ENCODE measurements at regions of chr10 and their contacts with region 1.

Region 1: GRCh38 chr10:119596537-119597404 is at the start of gene TIAL1:
- DNase-seq: peak; percentile 100
- H3K4me3 ChIP-seq: peak within 1 kb of the TSS; percentile 85 to 97 (median 97)
- H3K27ac ChIP-seq: peak within 1 kb of the TSS; percentile 95
- H3K4me1 ChIP-seq: peaks cover 41% of the 10 kb centered on the region
- H3K27me3 ChIP-seq: no peaks in the 10 kb centered on the region
- CTCF ChIP-seq: no peak
- POLR2A ChIP-seq: peak; percentile 96
- total RNA-seq, gene TIAL1: 150 and 154 TPM in 2 replicates

Region 2: GRCh38 chr10:119165171-119166110 is 431.3 kb before region 1 on chr10 and contains the start of gene SFXN4:
- CTCF ChIA-PET with region 1: no interaction called
- POLR2A ChIA-PET with region 1: no interaction called
- dilution Hi-C with region 1: no loop called
- intact Hi-C with region 1: loop called (anchors 5 kb)
- DNase-seq: peak; percentile 68
- H3K4me3 ChIP-seq: peak within 1 kb of the TSS; percentile 48 to 70 (median 62)
- H3K27ac ChIP-seq: peak within 1 kb of the TSS; percentile 54
- H3K4me1 ChIP-seq: peaks cover 24% of the 10 kb centered on the region
- H3K27me3 ChIP-seq: no peaks in the 10 kb centered on the region
- CTCF ChIP-seq: no peak
- POLR2A ChIP-seq: peak; percentile 81
- total RNA-seq, gene SFXN4: 14.5 and 17.1 TPM in 2 replicates

Region 3: DNA sequence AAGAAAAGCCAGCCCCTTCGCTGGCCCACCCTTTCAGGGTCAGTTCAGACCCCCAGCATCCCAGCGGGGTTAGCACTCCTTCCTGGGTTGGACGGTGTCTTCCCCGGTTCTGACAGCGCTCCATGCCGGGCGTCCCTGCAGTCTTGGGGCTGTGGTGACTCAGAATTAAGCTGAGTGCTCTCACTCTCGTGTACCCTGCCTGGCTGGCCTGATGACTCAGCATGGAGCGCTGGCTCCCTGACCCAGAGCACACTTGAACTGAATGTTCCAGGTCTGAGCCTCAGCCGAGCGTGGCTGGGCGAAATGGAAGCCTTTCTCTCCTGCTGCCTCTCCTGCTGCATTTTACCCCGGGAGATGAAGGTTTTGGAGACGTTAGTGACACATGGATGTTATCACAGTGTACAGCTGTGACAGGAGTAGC is 61.5 kb after region 1 on chr10:
- CTCF ChIA-PET with region 1: interaction called, 4 read pairs
- POLR2A ChIA-PET with region 1: no interaction called
- dilution Hi-C with region 1: no loop called
- intact Hi-C with region 1: loop called (anchors 1 kb)
- DNase-seq: peak; percentile 90
- H3K4me3 ChIP-seq: no peak overlapping the region
- H3K27ac ChIP-seq: peak overlapping the region; percentile 78
- H3K4me1 ChIP-seq: peaks cover 49% of the 10 kb centered on the region
- H3K27me3 ChIP-seq: no peaks in the 10 kb centered on the region
- CTCF ChIP-seq: no peak
- POLR2A ChIP-seq: no peak

Region 4: DNA sequence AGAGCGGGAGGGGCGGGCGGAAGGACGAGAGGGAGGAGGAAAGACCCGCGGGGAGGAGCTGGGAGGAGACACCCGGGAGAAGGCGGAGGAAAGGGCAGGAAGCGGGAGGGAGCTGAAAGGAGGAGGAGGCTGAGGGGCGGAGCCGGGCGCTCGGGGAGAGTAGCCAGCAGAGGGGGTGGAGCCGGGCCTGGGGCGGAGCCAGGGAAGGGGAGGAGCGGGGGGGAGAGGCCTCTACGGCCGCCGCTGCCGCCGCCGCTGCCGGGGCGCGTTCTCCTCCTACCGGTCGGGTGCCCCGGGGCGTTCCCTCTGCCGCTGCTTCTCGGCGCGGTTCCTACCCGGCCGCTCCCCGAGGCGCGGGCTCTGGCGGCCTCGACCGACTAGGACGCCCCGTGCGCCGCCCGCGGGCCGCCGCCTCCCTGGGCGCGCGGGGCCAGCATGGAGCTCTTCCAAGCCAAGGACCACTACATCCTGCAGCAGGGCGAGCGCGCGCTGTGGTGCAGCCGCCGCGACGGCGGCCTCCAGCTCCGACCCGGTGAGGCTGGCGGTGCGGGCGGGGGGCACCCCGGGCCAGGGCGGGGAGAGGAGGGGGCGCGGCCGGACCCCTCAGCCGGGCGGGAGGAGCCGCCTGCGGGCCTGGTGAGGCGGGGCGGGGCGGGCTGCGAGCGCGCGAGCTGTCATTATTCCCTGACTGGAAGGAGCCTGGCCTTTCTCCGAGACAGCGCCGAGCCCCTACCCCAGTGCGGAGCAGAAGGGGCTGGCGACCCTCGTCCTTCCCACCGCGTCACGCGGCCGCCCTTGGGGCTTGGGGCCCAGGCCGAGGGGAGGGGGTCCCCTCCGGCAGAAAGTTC is 129.3 kb after region 1 on chr10 and contains the start of gene INPP5F:
- CTCF ChIA-PET with region 1: no interaction called
- POLR2A ChIA-PET with region 1: interaction called, 5 read pairs
- dilution Hi-C with region 1: no loop called
- intact Hi-C with region 1: loop called (anchors 2 kb)
- DNase-seq: peak; percentile 97
- H3K4me3 ChIP-seq: peak within 1 kb of the TSS; percentile 56 to 81 (median 74)
- H3K27ac ChIP-seq: peak within 1 kb of the TSS; percentile 80
- H3K4me1 ChIP-seq: peaks cover 20% of the 10 kb centered on the region
- H3K27me3 ChIP-seq: no peaks in the 10 kb centered on the region
- CTCF ChIP-seq: no peak
- POLR2A ChIP-seq: peak; percentile 68
- total RNA-seq, gene INPP5F: 20.3 and 26.6 TPM in 2 replicates

Measured in endothelial cell of umbilical vein (primary cell).